CD8-positive, alpha-beta T cell (primary cell): ENCODE measurements at regions of chr17 and their contacts with region 1.

Region 1: DNA sequence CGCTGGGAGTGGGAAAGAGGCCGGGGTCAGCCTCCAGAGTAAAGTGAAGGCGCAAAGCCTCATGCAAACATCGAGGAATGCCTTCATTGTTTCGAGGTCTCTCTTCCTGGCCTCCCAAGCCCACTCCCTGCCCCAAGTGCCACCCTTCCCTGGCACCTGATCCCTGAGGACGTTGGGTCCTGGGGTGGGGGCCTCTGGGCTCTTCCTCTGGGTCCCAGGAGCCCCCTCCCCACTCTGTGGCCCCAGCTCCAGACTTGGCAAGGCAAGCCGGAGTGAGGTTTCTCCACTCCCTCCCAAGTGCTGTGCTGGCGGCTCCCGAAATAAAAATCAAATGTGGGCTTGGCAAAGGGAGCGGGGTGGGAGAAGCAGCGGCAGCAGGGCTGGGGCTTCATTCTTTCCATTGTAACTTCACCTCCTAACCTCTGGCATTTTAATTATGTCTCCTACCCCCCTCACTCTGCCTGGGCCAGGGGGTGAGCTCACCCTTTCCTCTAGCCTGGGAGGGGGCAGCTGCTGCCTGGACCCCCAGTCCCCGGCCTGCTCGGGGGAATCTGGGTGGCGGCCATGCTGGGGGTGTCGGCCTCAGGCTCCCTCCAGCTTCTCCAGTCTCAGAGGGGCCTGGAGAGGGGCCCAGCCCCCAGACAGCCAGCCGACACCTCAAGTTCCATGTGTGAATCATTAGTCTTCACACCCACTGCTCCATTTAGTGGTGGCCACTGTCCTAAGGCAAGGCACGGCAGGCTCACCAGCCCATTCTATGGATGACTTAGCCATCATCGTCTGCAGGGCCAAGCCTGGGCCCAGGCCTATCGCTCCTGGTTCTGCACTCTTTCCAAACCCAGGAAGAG is 14.6 kb upstream of the TMEM92 start:
- DNase-seq: peak in 1 of 9 experiments; percentile 23
- ATAC-seq: no peak
- H3K4me3 ChIP-seq: no peak overlapping the region
- H3K4me3 Mint-ChIP-seq: no peak overlapping the region
- H3K27ac ChIP-seq: no peak overlapping the region
- H3K27ac Mint-ChIP-seq: no peak overlapping the region
- H3K4me1 ChIP-seq: no peaks in the 10 kb centered on the region
- H3K4me1 Mint-ChIP-seq: no peaks in the 10 kb centered on the region
- H3K27me3 ChIP-seq: peaks cover 0 to 10% of the 10 kb centered on the region in 2 experiments
- H3K27me3 Mint-ChIP-seq: peaks cover 8% of the 10 kb centered on the region
- CTCF ChIP-seq: no peak

Region 2: DNA sequence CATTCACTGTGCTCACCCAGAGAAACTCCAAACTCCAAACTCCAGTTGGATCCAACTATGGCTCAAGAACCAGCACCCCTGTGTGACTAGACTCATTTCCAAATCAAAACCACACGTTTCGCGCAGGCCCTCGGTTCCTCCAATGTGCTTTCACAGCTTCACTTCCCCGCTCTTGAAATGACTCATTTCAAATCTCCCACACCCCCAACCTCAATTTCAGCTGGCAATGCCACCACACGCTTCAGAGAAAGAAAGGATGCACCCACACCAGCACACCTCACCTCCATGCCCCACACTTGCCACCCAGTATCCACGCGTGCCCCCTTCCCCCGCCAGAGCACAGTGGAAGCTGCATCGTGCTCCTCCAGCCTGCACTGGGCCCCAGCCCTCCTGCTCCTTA is 23.5 kb after region 1 on chr17:
- CTCF ChIA-PET with region 1: no interaction called
- POLR2A ChIA-PET with region 1: no interaction called
- intact Hi-C with region 1: loop called in 1 of 2 experiments (anchors 2 kb)
- DNase-seq: peak in 1 of 9 experiments; percentile 19
- ATAC-seq: no peak
- H3K4me3 ChIP-seq: no peak overlapping the region
- H3K4me3 Mint-ChIP-seq: no peak overlapping the region
- H3K27ac ChIP-seq: no peak overlapping the region
- H3K27ac Mint-ChIP-seq: no peak overlapping the region
- H3K4me1 ChIP-seq: no peaks in the 10 kb centered on the region
- H3K4me1 Mint-ChIP-seq: no peaks in the 10 kb centered on the region
- H3K27me3 ChIP-seq: no peaks in the 10 kb centered on the region
- H3K27me3 Mint-ChIP-seq: peaks cover 38% of the 10 kb centered on the region
- CTCF ChIP-seq: no peak